Right ventricle myocardium superior (tissue), 1 donor: ENCODE measurements at regions of chr17 and their contacts with region 1.

Region 1: DNA sequence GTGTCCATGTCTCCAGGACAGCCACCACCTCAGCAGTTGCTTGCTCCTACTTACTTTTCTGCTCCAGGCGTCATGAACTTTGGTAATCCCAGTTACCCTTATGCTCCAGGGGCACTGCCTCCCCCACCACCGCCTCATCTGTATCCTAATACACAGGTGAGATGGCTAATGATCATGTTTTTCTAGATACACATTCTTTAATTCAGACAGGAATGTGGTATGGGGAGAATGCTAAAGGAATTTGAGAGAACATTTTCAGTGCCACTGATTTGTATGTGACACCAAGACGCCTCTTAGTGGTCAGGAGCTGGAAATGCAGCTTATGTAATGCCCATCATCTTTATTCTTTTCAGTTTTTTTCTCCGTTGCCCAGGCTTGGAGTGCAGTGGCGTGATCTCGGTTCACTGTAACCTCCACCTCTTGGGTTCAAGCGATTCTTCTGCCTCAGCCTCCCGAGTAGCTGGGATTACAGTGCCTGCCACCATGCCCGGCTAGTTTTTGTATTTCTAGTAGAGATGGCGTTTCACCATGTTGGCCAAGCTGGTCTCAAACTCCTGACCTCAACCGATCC is 8.9 kb upstream of the RAPGEFL1 start:
- DNase-seq: no peak
- ATAC-seq: peak; percentile 74

Region 2: GRCh38 chr17:40019140-40019991 is 149.0 kb before region 1 on chr17:
- intact Hi-C with region 1: loop called (anchors 5 kb)
- DNase-seq: peak; percentile 47
- ATAC-seq: no peak

Region 3: GRCh38 chr17:40113110-40113906 is 55.0 kb before region 1 on chr17:
- intact Hi-C with region 1: loop called (anchors 5 kb)
- DNase-seq: peak; percentile 92
- ATAC-seq: peak; percentile 75

Region 4: DNA sequence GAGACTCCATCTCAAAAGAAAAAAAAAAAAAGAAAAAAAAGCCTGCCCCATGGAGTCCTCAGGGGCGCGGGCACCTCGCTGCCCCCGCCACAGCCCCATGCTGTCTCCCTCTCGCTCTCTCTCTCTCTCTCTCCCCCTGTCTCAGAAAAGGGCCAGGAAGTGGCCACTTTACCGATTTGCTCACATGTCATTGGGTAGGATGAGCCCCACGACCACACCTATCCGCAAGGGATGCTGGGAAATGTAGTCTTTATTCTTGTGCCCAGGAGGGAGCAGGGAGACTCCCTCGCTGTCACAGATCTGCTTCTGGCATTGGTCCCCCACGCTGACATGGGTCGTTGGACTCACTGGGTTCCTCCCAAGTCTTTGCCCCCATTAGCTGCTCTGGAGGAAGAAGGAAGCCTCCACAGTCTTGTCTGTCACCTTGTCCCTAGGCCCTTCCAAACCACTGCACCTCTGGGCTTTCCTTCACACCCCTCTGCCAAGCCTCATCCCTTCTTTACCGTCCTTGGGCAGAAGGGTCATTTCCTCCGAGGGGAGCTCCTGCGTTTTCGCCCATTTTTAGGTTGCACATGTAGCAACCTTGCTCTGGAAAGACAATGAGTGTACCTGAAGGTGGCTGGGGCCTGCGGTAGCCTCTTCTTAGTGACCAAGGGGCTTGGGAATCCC is 203.0 kb after region 1 on chr17:
- intact Hi-C with region 1: no loop called
- DNase-seq: no peak
- ATAC-seq: no peak